Left cardiac atrium (tissue), 4 donors: ENCODE measurements at regions of chr6 and their contacts with region 1.

Region 1: GRCh38 chr6:89371849-89372505 is 19.5 kb upstream of the UBE2J1 start:
- DNase-seq: peak; percentile 80
- ATAC-seq: peak; percentile 88 to 93

Region 2: GRCh38 chr6:89311853-89312531 is 60.0 kb before region 1 on chr6:
- intact Hi-C with region 1: loop called in 1 of 2 experiments (anchors 1 kb)
- DNase-seq: peak; percentile 66
- ATAC-seq: peak; percentile 66 to 81

Region 3: DNA sequence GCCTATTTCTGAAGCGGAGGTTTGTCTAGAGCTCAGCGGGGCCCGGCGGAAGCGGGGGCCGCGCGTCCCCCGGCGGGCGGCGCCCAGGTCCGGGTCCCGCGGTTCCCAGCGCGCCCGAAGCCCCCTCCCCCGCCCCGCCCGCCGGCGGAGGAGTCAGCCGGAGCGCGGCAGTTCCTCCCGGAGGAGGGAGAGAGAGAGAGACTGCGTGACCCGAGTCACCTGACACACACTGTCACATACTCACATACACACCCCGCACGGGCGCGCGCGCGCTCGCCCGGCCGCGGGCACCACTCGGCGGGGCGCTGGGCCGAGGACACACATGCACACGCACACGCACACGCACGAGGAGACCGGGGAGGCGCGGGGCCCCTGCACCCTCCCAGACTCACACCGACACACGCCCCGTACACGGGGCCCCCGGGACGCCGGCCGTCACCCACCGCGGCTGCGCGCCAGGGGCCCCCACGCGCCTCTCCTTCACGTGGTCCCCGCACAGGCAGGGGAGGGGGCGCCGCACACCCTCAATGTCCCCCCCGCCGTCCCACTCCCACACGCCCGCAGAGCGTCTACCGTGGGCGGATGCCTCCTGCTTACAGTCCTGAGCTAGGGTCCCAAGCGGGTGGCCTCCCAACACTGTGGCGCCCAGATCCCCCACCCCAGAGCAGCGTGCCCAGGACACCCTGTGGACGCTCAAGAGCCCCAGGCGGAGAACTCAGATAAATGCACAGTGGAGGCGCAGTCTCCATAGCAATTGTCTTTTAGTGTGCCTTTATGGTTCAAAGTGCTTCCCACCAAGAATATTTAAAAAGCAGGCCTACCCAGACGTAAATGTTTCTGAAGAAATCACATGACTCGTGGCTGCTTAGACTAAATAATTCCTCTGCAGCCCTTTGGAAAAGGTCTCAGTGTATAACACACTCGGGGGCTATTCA is 40.4 kb after region 1 on chr6 and contains the start of gene RRAGD:
- intact Hi-C with region 1: loop called in 1 of 2 experiments (anchors 5 kb)
- DNase-seq: peak; percentile 71
- ATAC-seq: peak; percentile 90 to 94
- total RNA-seq, gene RRAGD: 89.5 to 99.6 TPM